Left cardiac atrium (tissue), 4 donors: ENCODE measurements at regions of chr19 and their contacts with region 1.

Region 1: DNA sequence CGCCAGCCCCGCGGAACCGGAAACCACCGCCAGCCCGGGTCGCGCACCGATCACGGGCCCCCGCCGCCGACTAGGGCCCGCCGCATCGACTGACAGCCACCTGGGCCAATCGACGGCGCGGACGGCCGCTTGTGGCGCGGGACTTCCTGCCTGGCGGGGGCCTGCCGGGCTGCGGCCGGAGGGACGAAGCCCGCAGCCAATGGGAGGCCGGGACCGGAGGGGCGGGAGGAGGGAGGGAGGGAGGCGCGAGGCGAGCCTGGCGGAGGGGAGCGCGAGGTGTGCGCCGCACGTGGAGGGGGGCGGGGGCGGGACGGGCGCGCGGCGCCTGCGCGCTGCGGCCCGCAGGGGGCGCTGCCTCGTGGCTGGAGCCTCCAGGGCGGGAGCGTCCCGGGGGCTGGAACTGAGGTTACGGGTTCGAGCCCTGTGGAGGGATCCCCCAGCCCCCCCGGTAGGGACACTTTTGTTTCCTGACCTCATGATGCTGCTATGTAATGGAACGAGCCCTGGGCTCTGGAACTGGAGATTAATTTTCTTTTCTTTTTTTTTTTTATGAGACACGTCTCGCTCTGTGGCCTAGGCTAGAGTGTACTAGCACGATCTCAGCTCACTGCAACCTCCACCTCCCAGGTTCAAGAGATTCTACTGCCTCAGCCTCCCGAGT is at the start of gene MLLT1:
- DNase-seq: peak; percentile 97
- ATAC-seq: peak; percentile 97 to 98
- total RNA-seq, gene MLLT1: 40.1 to 51.4 TPM

Region 2: DNA sequence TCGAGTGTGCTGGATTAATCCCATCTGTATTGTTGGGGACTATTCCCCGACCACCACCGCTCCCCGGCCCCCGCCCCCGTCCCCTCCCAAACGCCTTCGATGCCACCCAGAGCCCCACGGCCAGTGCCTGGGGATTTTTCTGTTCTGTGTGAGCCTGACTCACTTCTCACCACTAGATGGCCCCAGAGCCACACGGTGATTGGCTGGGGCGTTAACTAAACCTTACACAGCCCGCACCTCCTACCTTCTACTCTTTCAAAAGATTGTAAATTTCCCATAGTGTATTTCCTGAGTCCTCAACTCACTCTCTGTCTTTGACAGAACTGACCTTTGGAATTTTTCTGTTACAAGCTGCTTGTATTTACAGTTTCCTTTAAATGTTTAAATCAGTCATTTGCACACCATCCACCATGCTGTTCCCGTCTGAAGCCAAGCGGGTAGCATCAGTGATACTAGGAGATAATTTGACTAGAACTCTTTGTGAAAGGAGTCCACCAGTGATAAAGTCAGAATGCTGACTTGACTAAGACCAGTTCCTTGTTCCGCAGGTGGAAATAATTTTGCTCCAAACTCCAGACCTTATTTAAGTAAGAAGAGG is 231.2 kb before region 1 on chr19:
- intact Hi-C with region 1: loop called in 1 of 2 experiments (anchors 10 kb)
- DNase-seq: peak; percentile 81
- ATAC-seq: peak; percentile 97 to 98

Region 3: DNA sequence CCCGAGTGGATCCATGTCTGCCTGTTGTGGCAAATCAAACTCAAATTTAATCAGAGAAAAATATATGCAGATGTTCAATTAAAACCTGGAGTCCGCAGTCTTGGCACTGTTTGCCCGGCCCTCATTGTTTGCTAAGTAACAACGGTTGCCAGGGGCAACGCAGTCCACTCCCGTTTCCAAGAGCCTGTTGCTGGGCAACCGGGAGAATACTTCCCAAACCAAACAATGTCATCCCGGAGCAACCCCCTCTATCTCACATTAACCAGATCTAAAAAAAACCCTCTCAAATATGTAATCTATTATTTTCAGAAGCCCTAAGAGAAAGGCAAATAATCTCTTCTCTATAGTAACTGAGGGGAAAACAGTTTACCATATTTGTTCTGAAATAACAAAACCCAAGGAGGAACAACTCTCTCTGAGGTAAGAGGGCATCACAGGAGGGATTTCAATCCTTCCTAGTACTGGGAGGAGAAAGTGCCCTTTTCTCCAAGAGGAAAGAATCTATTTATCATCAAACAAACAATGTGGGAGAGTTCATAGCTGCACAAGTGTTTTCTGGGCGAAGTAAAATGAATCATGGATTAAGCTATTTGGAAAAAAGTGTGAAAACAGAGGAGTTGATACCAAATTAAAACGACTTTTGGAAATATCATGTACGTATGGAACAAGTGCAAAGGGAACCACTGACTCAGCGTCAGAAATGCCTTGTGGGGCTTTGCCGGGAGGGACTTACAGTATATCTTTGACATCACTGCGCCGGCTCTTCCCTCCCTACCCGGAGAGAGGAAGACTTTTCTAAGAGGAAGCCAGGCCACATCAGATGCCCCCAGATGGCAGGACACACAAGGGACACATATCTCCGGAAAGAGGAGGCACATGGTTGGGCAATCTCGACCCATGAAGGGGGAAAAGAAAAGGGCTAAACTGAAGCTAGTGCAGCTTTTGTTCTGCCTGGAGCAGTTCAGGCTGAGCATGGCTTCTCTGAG is 213.1 kb before region 1 on chr19:
- intact Hi-C with region 1: loop called in 1 of 2 experiments (anchors 10 kb)
- DNase-seq: peak; percentile 99
- ATAC-seq: peak; percentile 77 to 85

Region 4: GRCh38 chr19:6171566-6171965 is 108.5 kb before region 1 on chr19:
- intact Hi-C with region 1: no loop called
- DNase-seq: no peak
- ATAC-seq: no peak

Region 5: GRCh38 chr19:6218491-6219162 is 61.4 kb before region 1 on chr19:
- intact Hi-C with region 1: loop called (anchors 5 to 10 kb)
- DNase-seq: peak; percentile 91
- ATAC-seq: peak; percentile 66 to 70